Heart right ventricle (tissue), 16 donors: ENCODE measurements at regions of chr12 and their contacts with region 1.

Region 1: DNA sequence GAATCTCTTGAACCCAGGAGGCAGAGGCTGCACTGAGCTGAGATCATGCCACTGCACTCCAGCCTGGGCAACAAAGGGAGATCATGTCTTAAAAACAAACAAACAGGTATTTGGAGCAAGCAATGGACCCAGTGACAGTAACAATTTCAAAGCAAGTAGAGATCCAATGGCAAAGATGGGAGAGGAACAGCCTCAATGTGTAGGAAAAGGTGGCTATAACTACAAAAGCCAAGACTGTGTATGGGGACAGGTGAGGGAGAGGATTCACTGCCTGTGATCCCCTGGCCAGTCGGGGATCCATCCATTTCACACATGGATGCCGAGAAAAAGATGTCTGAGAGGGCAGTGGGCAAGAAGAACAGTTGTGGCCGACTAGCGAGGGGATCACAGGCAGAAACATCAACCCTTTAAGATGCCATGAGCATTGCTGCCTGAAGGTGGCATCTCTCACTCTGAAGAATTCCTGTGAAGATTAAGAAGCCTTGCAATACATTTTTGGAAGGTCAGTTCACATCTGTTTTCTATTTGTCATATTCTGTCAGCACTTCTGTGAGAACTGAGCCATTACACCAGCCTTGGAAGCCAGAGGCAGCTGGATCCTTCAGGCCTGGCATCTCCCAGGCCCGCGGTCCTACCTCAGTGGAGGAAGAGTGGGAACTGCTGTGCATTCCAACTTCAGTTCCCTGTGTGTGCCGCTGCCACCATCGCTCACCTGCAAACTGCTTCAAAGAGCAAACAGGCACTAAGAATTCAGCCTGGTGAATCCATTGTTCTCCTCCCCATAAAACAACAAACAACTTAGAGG is 54.5 kb upstream of the FRS2 start:
- DNase-seq: peak; percentile 32 to 37
- ATAC-seq: peak; percentile 79 to 95 (median 83)
- H3K4me3 ChIP-seq: no peak overlapping the region
- H3K27ac ChIP-seq: no peak overlapping the region
- H3K4me1 ChIP-seq: peaks cover 3 to 12% (median 7%) of the 10 kb centered on the region in 9 donors
- H3K27me3 ChIP-seq: no peaks in the 10 kb centered on the region
- CTCF ChIP-seq: peak; percentile 43 to 77 (median 68)

Region 2: DNA sequence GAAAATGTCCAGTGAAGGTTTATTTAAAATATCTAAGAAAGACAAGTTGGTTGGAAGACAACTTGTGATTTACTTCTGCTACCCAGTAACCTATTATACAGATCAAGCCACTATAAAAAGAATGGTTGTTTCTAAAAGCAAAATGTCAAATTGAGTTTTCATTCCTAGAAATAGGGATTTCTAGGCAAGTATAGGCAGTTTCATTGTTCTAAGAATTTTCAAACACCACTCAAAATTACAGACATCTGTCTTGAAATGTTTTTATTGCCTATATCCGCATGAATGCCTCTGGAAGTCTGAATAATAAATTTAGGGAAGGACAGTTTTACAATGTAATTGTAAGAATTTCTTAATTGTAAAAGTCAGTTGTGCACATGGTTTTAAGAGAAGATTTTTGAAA is 47.5 kb before region 1 on chr12:
- intact Hi-C with region 1: loop called in 1 of 10 experiments (anchors 1 kb)
- DNase-seq: no peak
- ATAC-seq: no peak
- H3K4me3 ChIP-seq: no peak overlapping the region
- H3K27ac ChIP-seq: no peak overlapping the region
- H3K4me1 ChIP-seq: no peaks in the 10 kb centered on the region
- H3K27me3 ChIP-seq: no peaks in the 10 kb centered on the region
- CTCF ChIP-seq: no peak

Region 3: GRCh38 chr12:69519871-69520270 is 104.2 kb after region 1 on chr12:
- intact Hi-C with region 1: no loop called
- DNase-seq: no peak
- ATAC-seq: no peak
- H3K4me3 ChIP-seq: no peak overlapping the region
- H3K27ac ChIP-seq: no peak overlapping the region
- H3K4me1 ChIP-seq: peaks cover 0 to 31% (median 15%) of the 10 kb centered on the region in 9 donors
- H3K27me3 ChIP-seq: no peaks in the 10 kb centered on the region
- CTCF ChIP-seq: no peak

Region 4: GRCh38 chr12:69751476-69751875 is 335.8 kb after region 1 on chr12:
- intact Hi-C with region 1: no loop called
- DNase-seq: no peak
- ATAC-seq: no peak
- H3K4me3 ChIP-seq: no peak overlapping the region
- H3K27ac ChIP-seq: no peak overlapping the region
- H3K4me1 ChIP-seq: peaks cover 0 to under 1% (median 0%) of the 10 kb centered on the region in 9 donors
- H3K27me3 ChIP-seq: no peaks in the 10 kb centered on the region
- CTCF ChIP-seq: no peak